AG04449 (cell line): ENCODE measurements at regions of chr17 and their contacts with region 1.

Region 1: GRCh38 chr17:16991349-16992009 is 19.6 kb upstream of the TNFRSF13B start:
- DNase-seq: no peak
- H3K4me3 ChIP-seq: no peak overlapping the region
- CTCF ChIP-seq: peak; percentile 85

Region 2: GRCh38 chr17:16886655-16887322 is 104.7 kb before region 1 on chr17:
- CTCF ChIA-PET with region 1: no interaction called
- POLR2A ChIA-PET with region 1: no interaction called
- DNase-seq: no peak
- H3K4me3 ChIP-seq: no peak overlapping the region
- CTCF ChIP-seq: no peak

Region 3: DNA sequence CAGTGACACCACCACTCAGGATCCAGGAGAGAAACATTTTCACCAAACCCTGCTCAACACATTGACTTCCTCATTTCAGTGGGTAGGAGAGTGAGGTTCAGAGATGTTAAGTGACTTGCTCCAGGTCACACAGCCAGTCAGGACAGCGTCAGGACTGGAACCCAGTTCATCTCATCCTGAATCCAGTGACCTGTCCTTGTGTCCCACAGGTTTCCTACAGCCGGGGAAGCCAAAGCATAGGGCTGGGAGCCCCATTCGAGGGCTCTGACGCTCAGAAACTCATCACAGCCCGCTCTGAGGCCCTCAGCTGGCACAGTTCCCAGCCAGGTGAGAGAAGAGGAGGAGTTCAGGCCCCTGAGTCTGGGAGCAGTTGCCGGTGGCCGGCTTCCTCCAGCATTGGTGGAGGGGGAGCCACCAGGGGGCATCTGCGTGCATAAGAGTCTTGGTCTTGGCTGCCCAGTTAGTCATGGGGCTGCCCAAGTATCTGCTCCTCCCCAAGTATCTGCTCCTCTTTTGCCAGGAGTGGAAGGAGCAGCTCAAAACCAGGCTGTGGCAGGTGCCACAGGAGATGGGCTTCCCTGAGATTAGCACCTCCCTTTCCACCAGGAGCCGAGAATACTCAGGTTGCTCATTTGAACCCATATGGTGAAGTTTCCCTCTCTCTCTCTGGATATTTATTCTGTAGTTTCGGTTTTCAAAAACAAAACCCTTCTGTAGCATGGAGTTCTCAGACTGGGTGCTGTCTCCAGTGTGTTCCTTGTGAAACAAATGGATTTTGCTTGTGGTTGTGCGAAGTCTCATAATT is 75.5 kb before region 1 on chr17:
- CTCF ChIA-PET with region 1: interaction called, 41 read pairs
- POLR2A ChIA-PET with region 1: no interaction called
- DNase-seq: no peak
- H3K4me3 ChIP-seq: no peak overlapping the region
- CTCF ChIP-seq: peak; percentile 68

Region 4: GRCh38 chr17:16922386-16923104 is 68.9 kb before region 1 on chr17:
- CTCF ChIA-PET with region 1: interaction called, 41 read pairs
- POLR2A ChIA-PET with region 1: no interaction called
- DNase-seq: no peak
- H3K4me3 ChIP-seq: no peak overlapping the region
- CTCF ChIP-seq: no peak

Region 5: GRCh38 chr17:16980813-16981731 is 10.4 kb before region 1 on chr17:
- CTCF ChIA-PET with region 1: interaction called, 18 read pairs
- POLR2A ChIA-PET with region 1: interaction called, 4 read pairs
- DNase-seq: no peak
- H3K4me3 ChIP-seq: no peak overlapping the region
- CTCF ChIP-seq: no peak

Region 6: DNA sequence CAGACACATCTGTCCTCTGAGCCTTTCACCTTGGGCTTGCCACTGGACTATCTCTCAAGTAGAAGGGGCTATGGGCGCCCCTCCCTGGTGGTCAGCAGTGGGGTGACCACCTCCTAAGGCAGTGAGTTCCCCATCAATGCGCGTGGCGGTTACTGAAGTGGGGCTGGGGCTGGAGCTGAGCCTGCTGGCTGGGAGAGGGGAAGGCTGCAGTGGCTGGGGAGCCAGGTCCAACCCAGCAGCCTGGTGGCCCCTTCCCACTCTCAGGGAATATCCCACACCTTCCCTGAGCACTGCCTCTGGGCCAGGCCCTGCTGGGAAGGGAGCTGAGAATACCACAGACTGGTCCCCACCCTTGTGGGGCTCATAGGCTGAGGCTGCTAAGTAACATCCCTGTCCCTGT is 31.0 kb after region 1 on chr17:
- CTCF ChIA-PET with region 1: no interaction called
- POLR2A ChIA-PET with region 1: no interaction called
- DNase-seq: no peak
- H3K4me3 ChIP-seq: no peak overlapping the region
- CTCF ChIP-seq: no peak

Region 7: GRCh38 chr17:17129466-17129865 is 138.0 kb after region 1 on chr17:
- CTCF ChIA-PET with region 1: no interaction called
- POLR2A ChIA-PET with region 1: no interaction called
- DNase-seq: no peak
- H3K4me3 ChIP-seq: no peak overlapping the region
- CTCF ChIP-seq: no peak

Region 8: DNA sequence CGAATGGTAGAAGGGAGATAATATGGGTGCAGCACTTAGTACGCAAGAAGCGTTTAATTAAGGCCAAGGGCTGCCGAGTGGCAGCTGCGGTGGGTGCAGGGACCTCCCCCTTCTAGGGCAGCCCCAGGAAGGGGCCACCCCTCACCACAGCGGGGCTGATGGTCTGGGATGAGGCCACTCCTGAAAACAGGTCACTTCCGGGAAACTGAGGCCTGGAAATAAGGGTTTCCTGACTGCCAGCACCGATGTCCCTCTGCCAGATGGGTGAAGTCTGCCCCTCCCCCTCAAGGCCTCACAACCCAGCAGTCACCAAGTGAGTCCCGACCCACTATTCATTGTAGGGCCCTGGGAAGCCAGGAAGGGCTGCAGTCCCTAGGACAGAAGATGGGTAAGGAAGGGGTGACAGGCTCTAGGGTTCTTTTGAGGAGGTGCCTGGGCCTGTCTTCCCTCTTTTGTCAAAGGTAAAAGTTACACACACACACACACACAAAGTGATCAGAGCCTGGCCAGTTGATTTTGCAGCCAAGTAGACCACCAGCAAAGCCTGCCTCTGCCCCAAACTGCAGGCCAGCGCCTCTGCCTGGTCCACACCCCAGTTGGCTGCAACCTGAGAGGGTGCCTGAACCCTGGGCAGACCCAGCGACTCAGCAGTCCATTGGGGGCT is 832.8 kb after region 1 on chr17:
- CTCF ChIA-PET with region 1: no interaction called
- POLR2A ChIA-PET with region 1: no interaction called
- DNase-seq: no peak
- H3K4me3 ChIP-seq: peak overlapping the region; percentile 36
- CTCF ChIP-seq: no peak